ENCODE measurements at regions of chr2 and their contacts with region 1.

Region 1: GRCh38 chr2:141021109-141021508 is 1109.7 kb downstream of the LRP1B start:
- DNase-seq: peak; percentile 78
- ATAC-seq: peak; percentile 40; the same call in 1 of the 2 replicates
- H3K4me3 ChIP-seq: no peak overlapping the region
- H3K27ac ChIP-seq: no peak overlapping the region
- H3K4me1 ChIP-seq: no peaks in the 10 kb centered on the region; the same call in 1 of the 2 replicates
- H3K27me3 ChIP-seq: no peaks in the 10 kb centered on the region
- CTCF ChIP-seq: no peak
- POLR2A ChIP-seq: no peak
- RAD21 ChIP-seq: no peak

Region 2: DNA sequence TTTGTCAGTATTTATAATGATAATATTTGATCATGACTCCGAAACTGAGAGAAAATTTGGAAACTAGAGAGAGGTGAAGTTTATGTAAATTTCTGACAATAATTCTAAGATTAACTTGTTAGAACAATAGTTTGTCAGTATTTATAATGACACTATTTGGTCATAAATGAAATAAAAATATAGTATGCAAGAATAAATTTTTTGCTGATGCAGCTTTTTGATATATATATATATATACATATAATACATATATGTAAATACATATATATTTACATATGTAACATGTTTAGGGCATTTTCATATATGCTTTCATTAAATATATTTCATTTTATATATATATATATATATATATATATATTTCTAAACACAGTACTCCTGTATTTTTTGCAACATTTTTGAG is 48.4 kb before region 1 on chr2:
- CTCF ChIA-PET with region 1: no interaction called
- POLR2A ChIA-PET with region 1: no interaction called
- dilution Hi-C with region 1: no loop called
- in situ Hi-C with region 1: no loop called
- intact Hi-C with region 1: no loop called
- DNase-seq: no peak
- ATAC-seq: no peak
- H3K4me3 ChIP-seq: no peak overlapping the region
- H3K27ac ChIP-seq: no peak overlapping the region
- H3K4me1 ChIP-seq: peaks cover 2% of the 10 kb centered on the region; the same call in 1 of the 2 replicates
- H3K27me3 ChIP-seq: no peaks in the 10 kb centered on the region
- CTCF ChIP-seq: no peak
- POLR2A ChIP-seq: no peak
- RAD21 ChIP-seq: no peak

Region 3: GRCh38 chr2:141242008-141242407 is 220.9 kb after region 1 on chr2:
- CTCF ChIA-PET with region 1: no interaction called
- POLR2A ChIA-PET with region 1: no interaction called
- dilution Hi-C with region 1: no loop called
- in situ Hi-C with region 1: no loop called
- intact Hi-C with region 1: no loop called
- DNase-seq: no peak
- ATAC-seq: no peak
- H3K4me3 ChIP-seq: no peak overlapping the region
- H3K27ac ChIP-seq: no peak overlapping the region
- H3K4me1 ChIP-seq: no peaks in the 10 kb centered on the region
- H3K27me3 ChIP-seq: no peaks in the 10 kb centered on the region
- CTCF ChIP-seq: no peak
- POLR2A ChIP-seq: no peak
- RAD21 ChIP-seq: no peak

Region 4: GRCh38 chr2:142347751-142348150 is 1326.6 kb after region 1 on chr2:
- CTCF ChIA-PET with region 1: no interaction called
- POLR2A ChIA-PET with region 1: no interaction called
- dilution Hi-C with region 1: no loop called
- in situ Hi-C with region 1: no loop called
- intact Hi-C with region 1: loop called (anchors 10 kb)
- DNase-seq: no peak
- ATAC-seq: no peak
- H3K4me3 ChIP-seq: no peak overlapping the region
- H3K27ac ChIP-seq: no peak overlapping the region
- H3K4me1 ChIP-seq: no peaks in the 10 kb centered on the region
- H3K27me3 ChIP-seq: no peaks in the 10 kb centered on the region
- CTCF ChIP-seq: no peak
- POLR2A ChIP-seq: no peak
- RAD21 ChIP-seq: no peak